GM13976 (cell line): ENCODE measurements at regions of chr14 and their contacts with region 1.

Region 1: GRCh38 chr14:35140718-35141581 is 18.6 kb downstream of the PRORP start:
- DNase-seq: no peak
- CTCF ChIP-seq: no peak

Region 2: GRCh38 chr14:35174342-35174741 is 33.4 kb after region 1 on chr14:
- in situ Hi-C with region 1: no loop called
- DNase-seq: no peak
- CTCF ChIP-seq: no peak

Region 3: GRCh38 chr14:35414365-35414764 is 273.4 kb after region 1 on chr14:
- in situ Hi-C with region 1: loop called (anchors 5 kb)
- DNase-seq: no peak
- CTCF ChIP-seq: no peak

Region 4: DNA sequence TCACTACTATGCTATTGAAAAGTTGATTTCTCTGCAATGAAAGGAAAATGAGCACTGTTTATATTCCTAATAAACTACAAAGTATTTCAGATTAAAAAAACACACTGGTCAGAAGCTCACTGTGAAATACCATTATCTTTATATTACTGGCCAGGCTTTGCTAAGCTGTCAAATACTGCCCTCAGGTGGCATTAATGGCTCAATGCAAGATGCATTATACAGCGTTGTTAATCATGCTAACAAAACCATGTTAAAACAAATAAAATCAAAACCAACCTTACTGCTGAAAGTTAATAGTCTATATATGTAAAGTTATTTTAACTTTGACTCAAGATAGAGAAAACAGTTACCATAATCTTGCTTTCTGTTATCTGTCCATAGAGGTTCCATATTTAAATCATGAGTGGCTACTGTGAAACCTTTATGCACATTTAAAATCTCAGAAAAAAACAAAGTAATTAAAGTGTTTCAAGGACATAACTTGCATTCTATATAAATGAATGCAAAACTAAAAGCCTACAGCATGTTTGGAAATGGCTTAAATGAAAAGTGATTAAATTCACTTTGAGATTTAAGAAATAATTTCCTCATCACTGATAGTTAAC is 546.5 kb after region 1 on chr14:
- in situ Hi-C with region 1: loop called (anchors 10 kb)
- DNase-seq: peak; percentile 25
- CTCF ChIP-seq: peak; percentile 81

Region 5: DNA sequence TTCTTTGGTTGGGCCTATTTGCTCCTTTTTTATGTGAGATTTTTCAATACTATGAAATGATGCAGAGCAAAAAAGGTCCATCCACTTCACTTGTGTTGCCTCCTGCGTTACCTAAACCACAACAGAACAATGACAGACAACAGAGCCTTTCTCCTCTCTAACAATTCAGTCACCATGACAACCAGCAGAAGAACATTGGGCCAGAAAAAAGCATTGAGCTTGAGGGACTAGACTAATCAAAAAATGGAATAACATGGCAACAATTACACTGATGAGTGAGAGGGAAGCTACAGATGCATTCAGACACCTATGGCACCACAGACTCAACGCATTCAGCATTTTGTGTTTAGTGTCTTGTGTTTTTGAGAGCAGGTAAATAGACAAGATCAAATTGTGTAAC is 1080.2 kb after region 1 on chr14:
- in situ Hi-C with region 1: no loop called
- DNase-seq: no peak
- CTCF ChIP-seq: no peak